Activated CD8-positive, alpha-beta memory T cell treated with anti-CD3 and anti-CD28 coated beads, Interleukin-2, amount 10 ng/mL, durations not matched to agents 7 days and 5 days (primary cell): ENCODE measurements at regions of chr10 and their contacts with region 1.

Region 1: GRCh38 chr10:30751678-30752331 is 122.3 kb upstream of the LYZL2 start:
- DNase-seq: peak; percentile 92
- ATAC-seq: peak; percentile 90
- H3K4me3 Mint-ChIP-seq: peak overlapping the region; percentile 26
- H3K27ac Mint-ChIP-seq: peak overlapping the region; percentile 80
- H3K4me1 Mint-ChIP-seq: peaks cover 55% of the 10 kb centered on the region
- H3K27me3 Mint-ChIP-seq: no peaks in the 10 kb centered on the region

Region 2: DNA sequence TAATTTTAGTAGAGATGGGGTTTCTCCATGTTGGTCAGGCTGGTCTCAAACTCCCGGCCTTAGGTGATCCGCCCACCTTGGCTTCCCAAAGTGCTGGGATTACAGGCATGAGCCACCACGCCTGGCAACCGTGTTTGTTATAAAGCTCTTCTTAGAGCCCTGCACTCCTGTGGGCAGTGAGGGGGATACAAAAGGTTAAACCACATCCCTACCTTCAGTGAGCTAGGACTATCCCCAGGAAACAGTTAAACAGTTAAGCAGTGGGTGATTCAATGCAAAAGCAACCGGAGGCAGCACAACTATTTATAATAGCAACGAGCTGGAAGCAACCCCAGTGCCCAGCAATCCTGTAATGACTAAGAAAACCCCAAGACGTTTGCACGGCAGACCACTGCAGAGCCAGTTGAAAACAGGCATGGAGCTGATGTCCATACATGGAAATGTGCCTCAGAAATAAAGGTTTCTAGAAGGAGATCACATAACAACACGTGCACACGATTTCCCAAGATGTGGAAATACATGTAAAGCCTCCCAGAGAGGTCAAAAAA is 15.0 kb before region 1 on chr10:
- CTCF ChIA-PET with region 1: interaction called, 104 read pairs
- DNase-seq: peak; percentile 91
- ATAC-seq: peak; percentile 96
- H3K4me3 Mint-ChIP-seq: no peak overlapping the region
- H3K27ac Mint-ChIP-seq: peak overlapping the region; percentile 87
- H3K4me1 Mint-ChIP-seq: peaks cover 44% of the 10 kb centered on the region
- H3K27me3 Mint-ChIP-seq: no peaks in the 10 kb centered on the region

Region 3: GRCh38 chr10:30783939-30784500 is 32.2 kb after region 1 on chr10:
- CTCF ChIA-PET with region 1: interaction called, 79 read pairs
- DNase-seq: peak; percentile 90
- ATAC-seq: peak; percentile 84
- H3K4me3 Mint-ChIP-seq: peak overlapping the region; percentile 72
- H3K27ac Mint-ChIP-seq: peak overlapping the region; percentile 84
- H3K4me1 Mint-ChIP-seq: peaks cover 27% of the 10 kb centered on the region
- H3K27me3 Mint-ChIP-seq: peaks cover 3% of the 10 kb centered on the region

Region 4: DNA sequence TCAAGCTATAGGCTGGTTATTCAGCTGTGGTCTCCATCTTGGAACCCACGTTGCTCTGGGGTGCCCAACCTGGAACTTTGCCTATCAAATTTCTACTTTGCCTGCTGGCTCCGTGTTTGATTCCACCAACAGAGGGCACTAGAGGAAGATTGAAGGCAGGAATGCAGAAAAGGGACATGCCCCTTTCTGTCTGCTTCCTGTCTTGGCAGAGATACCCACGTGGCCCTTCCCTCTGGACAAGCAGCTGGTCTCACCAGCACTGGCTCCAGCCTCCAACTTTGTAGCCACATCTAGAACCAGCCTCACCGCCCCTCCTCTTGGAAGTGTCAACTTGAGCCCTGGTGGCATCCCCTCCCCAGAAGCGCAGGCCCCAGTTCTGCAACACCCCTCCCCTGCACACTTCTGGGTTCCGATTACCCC is 332.0 kb after region 1 on chr10:
- CTCF ChIA-PET with region 1: interaction called, 19 read pairs
- DNase-seq: peak; percentile 74
- ATAC-seq: peak; percentile 74
- H3K4me3 Mint-ChIP-seq: no peak overlapping the region
- H3K27ac Mint-ChIP-seq: peak overlapping the region; percentile 22
- H3K4me1 Mint-ChIP-seq: peaks cover 11% of the 10 kb centered on the region
- H3K27me3 Mint-ChIP-seq: peaks cover 2% of the 10 kb centered on the region